Right ventricle myocardium superior (tissue), 1 donor: ENCODE measurements at regions of chr2 and their contacts with region 1.

Region 1: GRCh38 chr2:25041928-25042320 is at the start of gene EFR3B:
- DNase-seq: peak; percentile 98
- ATAC-seq: peak; percentile 99
- total RNA-seq, gene EFR3B: 3.8 TPM

Region 2: DNA sequence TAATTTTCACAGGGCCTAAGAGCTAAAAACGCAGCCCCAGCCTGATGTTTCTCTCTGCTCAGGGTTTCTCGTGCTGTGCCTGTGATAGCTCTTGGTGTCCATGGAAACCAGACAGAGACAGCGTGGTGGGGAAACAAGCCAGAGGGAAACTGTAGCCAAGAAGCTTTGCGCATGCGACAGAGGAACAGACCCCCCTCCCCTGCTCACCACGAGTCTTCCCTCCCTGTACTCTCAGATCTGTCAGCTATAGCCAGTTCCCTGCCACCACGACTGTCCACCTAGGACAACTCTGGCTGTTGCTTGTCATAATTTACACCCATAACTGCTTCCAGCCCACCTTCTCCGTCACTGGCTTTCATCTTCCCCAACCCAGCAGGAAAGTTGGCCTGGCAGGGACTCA is 57.0 kb before region 1 on chr2:
- intact Hi-C with region 1: loop called (anchors 5 kb)
- DNase-seq: peak; percentile 50
- ATAC-seq: peak; percentile 85